Activated T-helper 1 cell treated with anti-CD3 and anti-CD28 coated beads, Interleukin-12 subunit alpha, Interleukin-12 subunit beta, Interleukin-2, Interleukin-4 antibody, amounts not matched to agents 30 ng/mL and 10 ng/mL and 1 ng/mL, durations not matched to agents 14 hours and 24 hours and 36 hours (primary cell): ENCODE measurements at regions of chr7 and their contacts with region 1.

Region 1: DNA sequence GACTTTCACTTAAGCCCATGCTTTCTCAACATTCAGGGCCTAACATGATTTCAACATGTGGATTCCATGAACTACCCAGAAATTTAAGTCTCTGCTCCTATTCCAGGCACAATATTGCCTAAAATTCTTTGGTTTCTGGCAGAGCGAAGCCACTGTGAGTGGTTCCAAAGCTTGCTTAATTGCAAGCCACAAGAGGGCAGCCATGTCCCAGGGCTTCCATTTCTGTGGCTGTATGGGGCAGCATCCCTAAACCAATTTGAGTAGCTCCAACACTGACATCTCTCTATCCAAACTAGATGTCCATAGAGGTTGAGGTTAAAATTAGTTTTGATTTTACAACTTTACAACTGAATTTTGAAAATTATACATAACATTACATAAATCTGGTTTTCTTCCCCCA is 56.3 kb upstream of the MDFIC start:
- DNase-seq: peak; percentile 31
- H3K4me3 Mint-ChIP-seq: no peak overlapping the region
- H3K27ac Mint-ChIP-seq: no peak overlapping the region
- H3K4me1 Mint-ChIP-seq: peaks cover 23% of the 10 kb centered on the region
- H3K27me3 Mint-ChIP-seq: peaks cover 2% of the 10 kb centered on the region

Region 2: GRCh38 chr7:114922016-114922651 is 56.6 kb after region 1 on chr7 and contains the start of gene MDFIC:
- intact Hi-C with region 1: loop called (anchors 1 kb)
- DNase-seq: peak; percentile 56
- H3K4me3 Mint-ChIP-seq: peak within 1 kb of the TSS; percentile 96
- H3K27ac Mint-ChIP-seq: peak within 1 kb of the TSS; percentile 97
- H3K4me1 Mint-ChIP-seq: peaks cover 63% of the 10 kb centered on the region
- H3K27me3 Mint-ChIP-seq: no peaks in the 10 kb centered on the region
- total RNA-seq, gene MDFIC: 114 and 136 TPM in 2 replicates

Region 3: DNA sequence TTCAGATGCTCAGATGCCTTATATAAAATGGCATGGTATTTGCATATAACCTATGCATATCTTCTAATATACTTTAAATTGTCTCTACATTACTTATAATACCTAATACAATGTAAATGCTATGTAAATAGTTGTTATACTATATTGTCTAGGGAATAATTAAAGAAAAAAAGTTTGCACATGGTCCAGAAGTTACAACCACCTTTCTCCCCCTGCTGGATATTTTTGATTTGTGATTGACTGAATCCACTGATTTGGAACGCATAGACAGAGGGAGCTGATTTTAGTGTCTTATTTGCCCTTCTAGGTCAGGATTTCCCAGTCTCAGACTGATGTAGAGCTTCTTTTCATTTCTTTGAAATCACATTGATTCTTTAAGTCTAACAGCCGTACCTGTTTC is 88.2 kb after region 1 on chr7:
- intact Hi-C with region 1: loop called (anchors 1 kb)
- DNase-seq: no peak
- H3K4me3 Mint-ChIP-seq: no peak overlapping the region
- H3K27ac Mint-ChIP-seq: no peak overlapping the region
- H3K4me1 Mint-ChIP-seq: peaks cover 46% of the 10 kb centered on the region
- H3K27me3 Mint-ChIP-seq: no peaks in the 10 kb centered on the region

Region 4: GRCh38 chr7:115217373-115217772 is 351.8 kb after region 1 on chr7:
- intact Hi-C with region 1: loop called (anchors 1 kb)
- DNase-seq: no peak
- H3K4me3 Mint-ChIP-seq: no peak overlapping the region
- H3K27ac Mint-ChIP-seq: no peak overlapping the region
- H3K4me1 Mint-ChIP-seq: peaks cover 6% of the 10 kb centered on the region
- H3K27me3 Mint-ChIP-seq: no peaks in the 10 kb centered on the region

Region 5: GRCh38 chr7:115475761-115476385 is 610.3 kb after region 1 on chr7:
- intact Hi-C with region 1: loop called (anchors 10 kb)
- DNase-seq: no peak
- H3K4me3 Mint-ChIP-seq: no peak overlapping the region
- H3K27ac Mint-ChIP-seq: no peak overlapping the region
- H3K4me1 Mint-ChIP-seq: peaks cover 7% of the 10 kb centered on the region
- H3K27me3 Mint-ChIP-seq: peaks cover 26% of the 10 kb centered on the region

Region 6: GRCh38 chr7:115910541-115911164 is 1045.1 kb after region 1 on chr7:
- intact Hi-C with region 1: loop called (anchors 1 kb)
- DNase-seq: no peak
- H3K4me3 Mint-ChIP-seq: no peak overlapping the region
- H3K27ac Mint-ChIP-seq: no peak overlapping the region
- H3K4me1 Mint-ChIP-seq: no peaks in the 10 kb centered on the region
- H3K27me3 Mint-ChIP-seq: peaks cover 3% of the 10 kb centered on the region